CD4-positive, alpha-beta memory T cell (primary cell): ENCODE measurements at regions of chr1 and their contacts with region 1.

Region 1: DNA sequence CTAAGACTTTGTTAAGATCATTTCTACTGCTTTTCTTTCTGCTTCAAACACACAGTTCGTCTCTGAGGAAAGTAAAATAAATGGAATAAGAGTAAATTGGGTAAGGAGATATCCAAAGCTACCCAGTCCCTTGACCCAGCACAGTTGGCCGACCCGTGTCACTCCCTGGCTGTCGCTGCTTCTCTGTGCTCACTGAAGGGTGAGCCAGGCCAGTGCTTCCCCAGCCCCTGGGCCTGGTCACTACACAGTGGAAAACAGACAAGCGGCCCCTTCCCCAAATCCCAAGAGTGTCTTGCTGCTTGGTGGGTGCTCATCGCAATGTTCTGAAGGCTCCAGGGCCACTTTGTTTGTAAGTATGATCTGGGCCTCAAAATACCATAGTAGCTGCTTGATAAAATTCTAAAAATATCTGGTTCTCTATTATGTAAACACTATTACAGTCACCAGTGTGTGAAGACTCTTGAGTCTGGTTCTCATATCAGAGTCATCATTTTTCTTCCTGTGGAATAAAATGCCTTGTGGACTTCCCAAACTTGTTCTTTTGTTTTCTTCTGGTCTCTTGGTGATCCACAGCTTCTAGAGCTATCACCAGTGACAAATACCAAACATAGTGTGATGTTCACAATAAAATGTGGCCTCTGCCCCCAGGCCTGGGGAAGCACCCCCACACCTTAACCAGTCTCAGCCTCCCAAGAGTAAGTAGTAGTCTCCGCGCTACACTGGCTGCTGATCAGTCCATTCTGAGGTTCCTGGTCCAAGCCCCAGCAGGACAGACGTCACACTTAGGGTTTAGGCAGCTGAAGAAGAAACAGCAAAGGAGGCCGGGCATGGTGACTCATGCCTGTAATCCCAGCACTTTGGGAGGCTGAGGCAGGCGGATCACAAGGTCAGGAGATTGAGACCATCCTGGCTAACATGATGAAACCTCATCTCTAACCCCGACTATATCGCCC is 106.2 kb downstream of the DHRS3 start:
- DNase-seq: no peak
- H3K4me3 ChIP-seq: peak overlapping the region; percentile 12 to 25
- H3K4me3 Mint-ChIP-seq: peak overlapping the region; percentile 83 to 95 (median 88)
- H3K27ac ChIP-seq: peak overlapping the region; percentile 45
- H3K27ac Mint-ChIP-seq: peak overlapping the region; percentile 22 to 96 (median 88)
- H3K4me1 ChIP-seq: peaks cover 28% of the 10 kb centered on the region
- H3K4me1 Mint-ChIP-seq: peaks cover 30 to 62% (median 49%) of the 10 kb centered on the region in 4 donors
- H3K27me3 ChIP-seq: no peaks in the 10 kb centered on the region
- H3K27me3 Mint-ChIP-seq: no peaks in the 10 kb centered on the region

Region 2: DNA sequence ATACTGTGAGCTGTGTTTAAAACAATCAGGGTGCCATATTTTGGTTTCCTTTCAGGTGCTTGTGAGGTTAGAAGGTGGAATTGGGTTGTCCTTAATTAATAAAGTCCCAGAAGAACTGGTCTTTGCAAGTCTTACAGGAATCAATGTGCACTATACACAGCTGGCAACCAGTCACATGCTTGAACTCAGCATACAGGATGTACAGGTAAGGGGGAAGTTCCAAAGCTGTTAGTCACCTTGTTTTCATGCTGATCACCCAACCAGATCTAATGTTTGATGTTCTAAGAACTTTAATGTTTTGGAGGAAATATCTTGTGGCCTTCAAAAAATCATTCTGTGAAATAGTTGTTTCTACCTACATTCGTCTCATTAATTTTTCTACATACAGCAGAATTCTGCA is 125.7 kb before region 1 on chr1:
- CTCF ChIA-PET with region 1: no interaction called
- POLR2A ChIA-PET with region 1: interaction called, 21 read pairs
- intact Hi-C with region 1: no loop called
- DNase-seq: peak; percentile 30 to 84 (median 52)
- H3K4me3 ChIP-seq: peak overlapping the region in 1 of 2 donors; percentile 40
- H3K4me3 Mint-ChIP-seq: peak overlapping the region; percentile 42 to 80 (median 72)
- H3K27ac ChIP-seq: peak overlapping the region; percentile 58
- H3K27ac Mint-ChIP-seq: peak overlapping the region; percentile 82 to 96 (median 92)
- H3K4me1 ChIP-seq: peaks cover 48% of the 10 kb centered on the region
- H3K4me1 Mint-ChIP-seq: peaks cover 42 to 79% (median 52%) of the 10 kb centered on the region in 4 donors
- H3K27me3 ChIP-seq: no peaks in the 10 kb centered on the region
- H3K27me3 Mint-ChIP-seq: no peaks in the 10 kb centered on the region

Region 3: DNA sequence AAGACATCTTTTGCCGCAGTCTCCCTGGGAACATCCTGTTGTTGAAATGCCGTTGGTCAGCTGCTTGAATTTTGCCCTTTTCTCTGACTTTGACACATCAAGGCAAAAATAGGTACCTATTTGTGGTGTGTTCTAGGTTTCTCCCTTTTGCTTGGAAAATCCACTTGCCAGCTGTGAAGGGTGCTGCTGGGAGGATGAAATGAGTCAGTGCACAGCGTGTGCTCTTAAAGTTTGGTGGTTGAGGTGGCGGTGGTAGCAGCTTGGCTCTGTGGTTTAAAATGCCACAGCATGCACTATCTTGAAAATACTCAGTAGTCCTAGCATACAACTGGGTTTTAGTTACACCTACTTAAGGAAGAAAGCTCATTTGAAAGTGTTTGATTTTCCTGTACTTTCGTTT is 77.6 kb before region 1 on chr1:
- CTCF ChIA-PET with region 1: interaction called, 3 read pairs
- POLR2A ChIA-PET with region 1: interaction called, 36 read pairs
- intact Hi-C with region 1: loop called (anchors 2 kb)
- DNase-seq: peak; percentile 29 to 74 (median 41)
- H3K4me3 ChIP-seq: peak overlapping the region in 1 of 2 donors; percentile 9
- H3K4me3 Mint-ChIP-seq: peak overlapping the region in 7 of 8 donors; percentile 42 to 83 (median 78)
- H3K27ac ChIP-seq: peak overlapping the region; percentile 4
- H3K27ac Mint-ChIP-seq: peak overlapping the region; percentile 83 to 94 (median 90)
- H3K4me1 ChIP-seq: peaks cover 59% of the 10 kb centered on the region
- H3K4me1 Mint-ChIP-seq: peaks cover 47 to 78% (median 57%) of the 10 kb centered on the region in 4 donors
- H3K27me3 ChIP-seq: no peaks in the 10 kb centered on the region
- H3K27me3 Mint-ChIP-seq: no peaks in the 10 kb centered on the region

Region 4: DNA sequence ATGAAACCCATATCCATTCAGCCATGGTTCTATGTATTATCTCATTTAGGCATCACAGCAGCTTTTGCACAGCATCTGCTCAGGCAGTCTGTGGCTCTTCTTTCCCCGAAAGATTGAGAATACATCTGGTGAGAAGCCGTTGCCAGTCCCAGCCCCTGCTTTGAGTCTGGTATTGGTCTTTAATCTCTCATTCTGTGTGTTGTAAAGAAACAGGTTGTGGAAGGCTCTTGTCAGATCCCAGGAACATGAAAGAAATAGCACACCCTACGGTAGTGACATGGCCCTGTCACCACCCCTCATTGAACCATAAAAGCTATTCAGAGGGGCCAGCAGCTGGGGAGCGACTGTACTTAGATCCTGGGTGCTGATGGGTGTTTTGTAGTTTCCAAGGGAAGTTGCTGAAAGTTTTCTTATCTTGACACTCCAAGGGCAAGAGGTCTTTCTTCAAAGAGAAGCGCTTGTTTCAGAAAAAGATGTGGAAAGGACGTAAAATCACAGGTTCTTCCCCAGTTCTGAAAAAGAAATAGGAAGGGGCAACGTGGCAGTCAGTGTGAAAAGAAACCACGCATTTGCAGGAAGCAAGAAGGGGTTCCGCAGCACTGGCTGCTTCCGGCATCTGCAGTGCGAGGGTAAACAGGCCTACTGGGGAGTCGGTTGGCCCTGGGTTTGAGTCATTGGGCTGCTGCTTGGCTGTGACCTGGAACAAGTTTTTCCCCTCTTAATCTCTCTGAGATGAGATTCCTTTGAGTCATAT is 38.8 kb before region 1 on chr1:
- CTCF ChIA-PET with region 1: interaction called, 4 read pairs
- POLR2A ChIA-PET with region 1: interaction called, 60 read pairs
- intact Hi-C with region 1: loop called (anchors 2 kb)
- DNase-seq: peak; percentile 30 to 71 (median 45)
- H3K4me3 ChIP-seq: peak overlapping the region in 1 of 2 donors; percentile 23
- H3K4me3 Mint-ChIP-seq: peak overlapping the region; percentile 72 to 85 (median 84)
- H3K27ac ChIP-seq: peak overlapping the region; percentile 51
- H3K27ac Mint-ChIP-seq: peak overlapping the region; percentile 93 to 98 (median 95)
- H3K4me1 ChIP-seq: peaks cover 79% of the 10 kb centered on the region
- H3K4me1 Mint-ChIP-seq: peaks cover 54 to 91% (median 70%) of the 10 kb centered on the region in 4 donors
- H3K27me3 ChIP-seq: no peaks in the 10 kb centered on the region
- H3K27me3 Mint-ChIP-seq: no peaks in the 10 kb centered on the region

Region 5: DNA sequence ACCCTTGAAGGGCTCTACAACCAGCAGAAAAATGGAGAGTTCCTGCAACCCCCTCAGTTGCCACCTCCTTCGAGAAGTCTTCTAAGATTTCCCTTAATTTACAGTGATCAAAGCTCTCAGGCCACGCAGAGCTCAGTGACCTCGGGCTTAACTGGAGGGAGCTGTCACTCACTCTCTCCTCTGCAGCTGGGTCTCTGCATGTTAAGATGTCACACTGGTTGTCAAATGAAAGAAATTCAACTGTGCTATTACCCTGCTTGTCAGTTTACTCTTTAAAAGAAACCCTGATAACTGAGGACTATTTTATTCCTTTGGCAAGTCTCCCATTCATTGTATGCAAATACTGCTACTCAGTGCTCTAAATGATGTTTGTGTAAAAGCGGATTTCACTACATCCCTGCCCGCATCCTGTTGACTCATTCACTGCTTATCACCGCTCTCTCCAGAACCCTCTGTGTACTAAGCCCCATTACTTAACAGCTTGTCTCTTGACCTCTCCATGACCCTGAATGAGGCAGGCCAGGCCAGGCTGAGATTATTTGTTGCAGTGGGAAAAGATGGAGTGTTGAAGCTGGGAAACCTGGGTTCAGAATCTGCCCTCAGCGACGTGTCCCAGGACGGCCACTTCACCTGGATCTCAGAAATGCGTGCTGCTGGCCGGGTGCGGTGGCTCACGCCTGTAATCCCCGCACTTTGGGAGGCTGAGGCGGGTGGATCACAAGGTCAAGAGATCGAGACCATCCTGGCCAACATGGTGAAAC is 92.5 kb after region 1 on chr1:
- CTCF ChIA-PET with region 1: interaction called, 5 read pairs
- POLR2A ChIA-PET with region 1: interaction called, 11 read pairs
- intact Hi-C with region 1: no loop called
- DNase-seq: peak; percentile 70 to 91 (median 76)
- H3K4me3 ChIP-seq: no peak overlapping the region
- H3K4me3 Mint-ChIP-seq: peak overlapping the region in 7 of 8 donors; percentile 59 to 81 (median 68)
- H3K27ac ChIP-seq: peak overlapping the region; percentile 27
- H3K27ac Mint-ChIP-seq: peak overlapping the region; percentile 57 to 96 (median 91)
- H3K4me1 ChIP-seq: peaks cover 51% of the 10 kb centered on the region
- H3K4me1 Mint-ChIP-seq: peaks cover 28 to 85% (median 54%) of the 10 kb centered on the region in 4 donors
- H3K27me3 ChIP-seq: no peaks in the 10 kb centered on the region
- H3K27me3 Mint-ChIP-seq: no peaks in the 10 kb centered on the region